A673 (cell line): ENCODE measurements at regions of chr10 and their contacts with region 1.

Region 1: DNA sequence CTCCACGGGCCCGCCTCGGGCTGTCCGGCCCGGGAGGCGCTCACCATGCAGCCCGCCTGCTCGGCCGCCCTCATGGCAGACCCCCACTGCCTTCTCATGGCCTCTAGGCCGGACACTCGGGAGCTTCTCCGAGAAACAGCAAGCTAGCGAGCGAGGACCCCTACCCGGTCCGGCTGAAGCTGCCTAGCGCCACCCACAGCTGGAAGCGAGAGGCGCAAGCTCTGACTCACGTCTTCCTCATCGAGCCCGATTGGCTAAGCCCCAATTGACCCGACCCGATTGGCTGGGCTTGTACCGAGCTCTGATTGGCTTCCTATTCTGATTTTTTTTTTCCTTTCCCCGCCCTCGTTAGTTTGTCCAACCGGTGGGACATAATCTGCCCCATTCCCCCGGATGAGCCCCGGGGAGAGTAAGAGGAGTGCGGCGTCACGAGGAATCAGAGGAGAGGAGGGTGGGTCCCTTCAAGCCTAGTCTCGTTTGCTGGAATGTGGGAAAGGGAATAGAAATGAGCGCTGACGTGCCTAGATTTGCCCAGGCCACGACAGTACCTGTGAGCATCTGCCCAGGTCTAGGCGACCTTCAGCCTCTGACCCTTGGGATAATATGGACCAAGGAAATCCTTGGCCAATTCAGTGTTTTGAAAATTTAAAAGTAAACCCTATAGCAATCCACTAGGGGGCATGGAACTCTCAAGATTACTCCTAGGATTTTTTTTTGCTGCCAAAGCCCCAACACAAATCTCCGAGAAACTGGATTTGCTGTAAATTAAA is at the start of gene TYSND1:
- DNase-seq: peak; percentile 100
- H3K4me3 ChIP-seq: peak within 1 kb of the TSS; percentile 75
- H3K27ac ChIP-seq: peak within 1 kb of the TSS; percentile 97
- H3K4me1 ChIP-seq: peaks cover 24% of the 10 kb centered on the region
- H3K27me3 ChIP-seq: no peaks in the 10 kb centered on the region
- CTCF ChIP-seq: peak; percentile 83
- total RNA-seq, gene TYSND1: 36.5 and 46.3 TPM in 2 replicates

Region 2: DNA sequence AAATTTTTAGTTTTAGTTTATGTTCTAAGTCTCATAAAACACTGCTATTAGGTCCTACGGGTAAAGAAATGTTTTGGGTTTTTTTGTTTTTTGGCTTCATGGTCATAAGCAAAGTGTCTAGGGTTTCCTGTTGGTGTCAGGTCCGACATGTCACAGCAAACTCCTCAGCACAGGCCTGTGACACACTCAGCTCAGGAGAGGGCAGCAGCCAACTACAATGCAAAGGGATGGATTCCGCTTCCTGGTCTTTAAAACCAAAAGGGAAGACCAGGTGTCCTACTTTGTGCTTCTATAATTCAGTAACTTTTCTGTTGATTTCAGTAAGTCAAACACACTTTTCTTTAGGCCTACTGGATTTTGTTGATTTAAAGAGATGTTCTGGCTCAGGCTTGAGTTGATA is 177.8 kb before region 1 on chr10:
- CTCF ChIA-PET with region 1: interaction called, 3 read pairs
- POLR2A ChIA-PET with region 1: no interaction called
- intact Hi-C with region 1: loop called (anchors 2 kb)
- DNase-seq: peak; percentile 81
- H3K4me3 ChIP-seq: no peak overlapping the region
- H3K27ac ChIP-seq: peak overlapping the region; percentile 65
- H3K4me1 ChIP-seq: peaks cover 46% of the 10 kb centered on the region
- H3K27me3 ChIP-seq: no peaks in the 10 kb centered on the region
- CTCF ChIP-seq: peak; percentile 75

Region 3: GRCh38 chr10:70115948-70116682 is 30.6 kb before region 1 on chr10:
- CTCF ChIA-PET with region 1: interaction called, 10 read pairs
- POLR2A ChIA-PET with region 1: no interaction called
- intact Hi-C with region 1: no loop called
- DNase-seq: peak; percentile 58
- H3K4me3 ChIP-seq: no peak overlapping the region
- H3K27ac ChIP-seq: no peak overlapping the region
- H3K4me1 ChIP-seq: no peaks in the 10 kb centered on the region
- H3K27me3 ChIP-seq: no peaks in the 10 kb centered on the region
- CTCF ChIP-seq: peak; percentile 97

Region 4: DNA sequence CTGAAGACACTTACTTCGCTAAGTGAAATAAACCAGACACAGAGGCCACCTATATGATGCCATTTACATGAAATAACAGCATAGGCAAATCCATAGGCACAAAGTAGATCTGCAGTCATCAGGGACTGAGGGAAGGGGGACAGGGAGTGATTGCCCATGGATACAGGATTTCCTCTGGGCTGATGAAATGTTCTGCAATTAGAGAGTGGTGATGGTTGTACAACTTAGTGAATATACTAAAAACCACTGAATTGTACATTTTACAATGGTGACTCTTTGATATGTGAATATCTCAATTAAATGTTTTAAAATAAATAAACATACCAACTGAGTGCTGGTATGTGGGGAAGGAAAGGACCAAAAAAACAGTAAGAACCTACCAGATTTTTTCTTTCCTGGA is 66.2 kb after region 1 on chr10:
- CTCF ChIA-PET with region 1: no interaction called
- POLR2A ChIA-PET with region 1: no interaction called
- intact Hi-C with region 1: loop called (anchors 5 kb)
- DNase-seq: no peak
- H3K4me3 ChIP-seq: no peak overlapping the region
- H3K27ac ChIP-seq: peak overlapping the region; percentile 54
- H3K4me1 ChIP-seq: no peaks in the 10 kb centered on the region
- H3K27me3 ChIP-seq: no peaks in the 10 kb centered on the region
- CTCF ChIP-seq: no peak

Region 5: GRCh38 chr10:70381471-70382421 is 235.1 kb after region 1 on chr10:
- CTCF ChIA-PET with region 1: interaction called, 11 read pairs
- POLR2A ChIA-PET with region 1: no interaction called
- intact Hi-C with region 1: loop called (anchors 5 kb)
- DNase-seq: peak; percentile 77
- H3K4me3 ChIP-seq: peak overlapping the region; percentile 61
- H3K27ac ChIP-seq: peak overlapping the region; percentile 76
- H3K4me1 ChIP-seq: peaks cover 23% of the 10 kb centered on the region
- H3K27me3 ChIP-seq: no peaks in the 10 kb centered on the region
- CTCF ChIP-seq: no peak